Activated T-helper 1 cell treated with anti-CD3 and anti-CD28 coated beads, Interleukin-12 subunit alpha, Interleukin-12 subunit beta, Interleukin-2, Interleukin-4 antibody, amounts not matched to agents 30 ng/mL and 10 ng/mL and 1 ng/mL, durations not matched to agents 14 hours and 24 hours and 36 hours (primary cell): ENCODE measurements at regions of chr1 and their contacts with region 1.

Region 1: DNA sequence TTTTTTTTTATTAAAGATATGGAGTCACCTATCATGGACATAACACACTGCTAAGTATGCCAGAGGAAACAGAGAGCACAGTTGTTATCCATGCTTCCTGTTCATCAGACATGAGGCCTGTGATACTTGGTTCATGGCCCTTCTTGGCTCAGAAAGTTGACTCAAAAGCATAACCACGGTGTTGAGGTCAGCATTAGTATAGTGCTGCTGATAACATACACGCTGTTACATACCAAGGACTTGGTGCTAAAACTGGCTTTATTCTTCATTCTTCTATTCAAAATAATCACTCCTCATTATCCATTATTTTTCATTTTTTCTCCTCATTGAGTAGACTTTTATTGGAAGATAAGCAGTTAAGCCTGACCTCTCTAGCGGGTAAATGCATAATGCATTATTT is 464.1 kb downstream of the ADGRL2 start:
- DNase-seq: no peak
- H3K4me3 Mint-ChIP-seq: no peak overlapping the region
- H3K27ac Mint-ChIP-seq: no peak overlapping the region
- H3K4me1 Mint-ChIP-seq: no peaks in the 10 kb centered on the region
- H3K27me3 Mint-ChIP-seq: no peaks in the 10 kb centered on the region

Region 2: DNA sequence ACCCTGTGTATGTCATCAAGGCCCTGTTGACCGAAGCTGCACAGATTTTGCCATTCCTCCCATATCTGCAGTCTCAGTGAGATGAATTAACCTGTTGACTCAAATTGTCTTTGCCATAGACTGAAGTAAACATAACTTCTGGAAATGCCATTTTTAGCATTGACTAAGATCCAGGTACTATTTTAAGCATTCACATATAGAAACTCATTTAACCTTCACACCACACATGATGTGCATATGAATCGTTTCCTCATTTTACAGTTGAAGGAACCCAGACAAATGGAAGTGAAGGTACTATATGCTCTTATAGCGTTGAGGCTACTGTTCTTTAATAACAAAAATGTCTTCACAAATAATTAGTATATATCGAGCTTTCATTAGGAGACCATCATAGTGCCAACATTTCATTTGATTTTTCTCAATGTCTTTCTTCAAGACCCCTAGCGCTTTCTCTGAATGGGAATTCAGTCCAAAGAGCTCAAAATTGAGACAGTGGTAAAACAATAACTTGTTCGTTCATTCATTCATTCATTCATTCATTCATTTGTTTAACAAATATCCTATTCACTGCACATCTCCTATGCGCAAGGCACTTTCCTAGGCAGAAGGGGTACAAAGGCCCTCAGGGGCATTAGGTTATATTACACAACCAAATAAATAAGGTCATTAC is 19.3 kb before region 1 on chr1:
- intact Hi-C with region 1: loop called (anchors 2 kb)
- DNase-seq: no peak
- H3K4me3 Mint-ChIP-seq: no peak overlapping the region
- H3K27ac Mint-ChIP-seq: no peak overlapping the region
- H3K4me1 Mint-ChIP-seq: no peaks in the 10 kb centered on the region
- H3K27me3 Mint-ChIP-seq: no peaks in the 10 kb centered on the region